ENCODE measurements at regions of chr3 and their contacts with region 1.

Region 1: DNA sequence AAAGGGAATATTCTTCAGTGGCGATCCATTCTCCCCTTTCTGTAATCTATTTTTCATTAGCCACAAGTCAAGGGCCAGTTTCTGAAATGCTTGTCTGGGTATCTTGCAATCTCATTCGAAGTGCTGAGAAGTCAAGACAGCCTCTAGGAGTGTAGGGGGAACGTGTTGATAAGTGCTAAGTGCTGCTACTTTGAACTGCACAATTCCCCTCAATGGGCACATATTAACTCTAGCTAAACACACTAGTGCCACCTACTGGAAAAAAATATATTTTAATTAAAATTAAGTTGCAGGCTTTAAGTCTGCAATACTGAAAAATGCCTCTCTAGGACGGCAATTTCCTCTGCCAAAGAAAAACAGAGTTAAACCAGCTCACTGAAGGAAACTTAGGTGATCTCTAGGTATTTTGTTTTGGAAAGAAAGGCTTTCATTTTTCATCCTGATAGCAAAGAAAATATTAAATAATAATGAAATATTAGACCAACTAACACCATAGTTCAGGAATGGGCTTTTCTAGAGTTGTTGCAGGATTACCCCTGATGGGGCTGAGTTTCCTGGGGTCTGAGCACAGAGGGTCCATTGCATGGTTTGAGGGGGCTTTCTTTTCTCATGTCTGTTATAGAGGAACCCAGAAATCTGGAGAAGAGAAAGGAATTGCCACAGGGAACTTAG is 181.9 kb upstream of the KBTBD8 start:
- H3K4me3 ChIP-seq: no peak overlapping the region
- H3K27ac ChIP-seq: no peak overlapping the region
- H3K4me1 ChIP-seq: no peaks in the 10 kb centered on the region
- CTCF ChIP-seq: no peak

Region 2: GRCh38 chr3:66253790-66254620 is 562.2 kb before region 1 on chr3:
- CTCF ChIA-PET with region 1: interaction called, 28 read pairs
- POLR2A ChIA-PET with region 1: no interaction called
- H3K4me3 ChIP-seq: no peak overlapping the region
- H3K27ac ChIP-seq: no peak overlapping the region
- H3K4me1 ChIP-seq: no peaks in the 10 kb centered on the region
- CTCF ChIP-seq: peak; percentile 31; the same call in 1 of the 2 replicates

Region 3: GRCh38 chr3:66407611-66408218 is 408.5 kb before region 1 on chr3:
- CTCF ChIA-PET with region 1: interaction called, 13 read pairs
- POLR2A ChIA-PET with region 1: no interaction called
- H3K4me3 ChIP-seq: no peak overlapping the region
- H3K27ac ChIP-seq: no peak overlapping the region
- H3K4me1 ChIP-seq: no peaks in the 10 kb centered on the region
- CTCF ChIP-seq: peak; percentile 51

Region 4: DNA sequence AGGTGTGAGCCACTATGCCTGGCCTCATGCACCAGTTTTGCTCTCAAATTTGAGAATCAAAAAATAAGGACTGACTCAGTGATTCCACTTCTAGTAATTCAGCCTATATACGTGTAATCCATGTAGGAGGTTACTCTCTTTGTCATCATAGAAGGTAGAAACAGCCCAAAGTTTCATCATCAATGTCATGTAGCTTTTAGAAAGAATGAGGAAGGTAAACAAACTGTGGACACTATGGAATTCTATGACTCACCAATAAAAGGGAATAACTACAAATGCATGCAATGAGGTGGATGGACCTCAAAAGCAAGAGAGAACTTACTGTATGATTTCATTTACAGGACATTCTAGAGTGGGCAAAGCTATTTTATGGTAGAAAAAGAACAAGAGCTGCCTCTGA is 222.3 kb before region 1 on chr3:
- CTCF ChIA-PET with region 1: no interaction called
- POLR2A ChIA-PET with region 1: no interaction called
- H3K4me3 ChIP-seq: no peak overlapping the region
- H3K27ac ChIP-seq: no peak overlapping the region
- H3K4me1 ChIP-seq: no peaks in the 10 kb centered on the region
- CTCF ChIP-seq: no peak

Region 5: DNA sequence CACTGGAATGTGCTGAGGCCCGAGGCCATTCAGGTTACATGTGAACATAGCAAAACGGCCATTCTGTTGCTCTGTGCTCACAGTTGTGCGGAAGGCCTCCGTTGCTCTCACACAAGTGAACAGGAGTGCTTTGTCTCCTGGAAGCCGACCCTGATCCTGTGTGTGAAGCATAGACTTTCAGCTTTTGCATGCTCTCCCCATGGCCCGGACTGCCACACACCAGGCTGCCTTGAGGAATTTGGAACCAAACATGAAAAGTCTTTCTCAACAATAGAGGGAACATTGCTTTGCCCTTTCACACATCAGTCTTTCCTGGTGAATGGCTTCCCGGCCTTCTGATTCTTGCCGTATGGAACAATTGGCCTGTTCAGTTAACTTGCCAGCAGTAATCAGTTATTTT is 160.6 kb before region 1 on chr3:
- CTCF ChIA-PET with region 1: no interaction called
- POLR2A ChIA-PET with region 1: no interaction called
- H3K4me3 ChIP-seq: no peak overlapping the region
- H3K27ac ChIP-seq: no peak overlapping the region
- H3K4me1 ChIP-seq: no peaks in the 10 kb centered on the region
- CTCF ChIP-seq: no peak

Region 6: DNA sequence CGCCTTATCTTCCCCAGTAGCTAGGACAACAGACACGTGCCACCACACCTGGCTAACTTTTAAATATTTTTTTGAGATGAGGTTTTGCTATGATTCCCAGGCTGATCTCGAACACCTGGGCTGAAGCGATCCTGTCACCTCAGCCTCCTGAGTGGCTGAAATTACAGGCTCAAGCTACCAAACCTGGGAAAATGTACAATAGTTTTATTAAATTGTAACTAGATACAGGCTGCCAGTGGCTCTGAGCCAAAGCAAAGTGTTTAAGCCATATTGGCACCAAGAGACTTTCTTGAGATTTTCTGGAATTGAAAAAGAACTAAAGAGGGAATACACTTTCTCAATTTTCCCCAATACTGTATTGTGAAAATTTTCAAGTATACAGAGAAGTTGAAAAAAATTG is 633.9 kb after region 1 on chr3:
- CTCF ChIA-PET with region 1: no interaction called
- POLR2A ChIA-PET with region 1: no interaction called
- H3K4me3 ChIP-seq: no peak overlapping the region
- H3K27ac ChIP-seq: no peak overlapping the region
- H3K4me1 ChIP-seq: no peaks in the 10 kb centered on the region
- CTCF ChIP-seq: no peak